Right ventricle myocardium inferior (tissue), 1 donor: ENCODE measurements at regions of chr13 and their contacts with region 1.

Region 1: GRCh38 chr13:47420568-47420967 is 523.7 kb upstream of the HTR2A start:
- DNase-seq: no peak
- ATAC-seq: peak; percentile 14

Region 2: DNA sequence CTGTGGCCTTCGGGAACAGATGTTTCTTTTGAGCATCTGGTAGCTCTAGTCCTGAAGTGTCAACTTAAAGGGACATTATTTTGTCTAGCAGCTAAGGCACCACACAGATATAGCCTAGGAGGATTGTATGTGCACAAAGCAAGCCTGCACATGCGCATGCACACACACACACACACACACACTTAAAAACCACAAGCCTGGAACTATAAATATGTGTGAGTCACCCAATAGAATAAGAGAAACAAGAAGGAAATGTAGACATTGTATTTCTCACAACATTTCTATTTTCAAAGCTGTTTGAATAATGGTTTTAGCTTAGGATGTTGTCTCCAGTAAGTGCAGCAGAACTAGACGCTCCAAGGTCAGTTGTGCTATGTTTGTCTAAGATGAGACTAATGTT is 64.0 kb after region 1 on chr13:
- intact Hi-C with region 1: no loop called
- DNase-seq: no peak
- ATAC-seq: no peak

Region 3: DNA sequence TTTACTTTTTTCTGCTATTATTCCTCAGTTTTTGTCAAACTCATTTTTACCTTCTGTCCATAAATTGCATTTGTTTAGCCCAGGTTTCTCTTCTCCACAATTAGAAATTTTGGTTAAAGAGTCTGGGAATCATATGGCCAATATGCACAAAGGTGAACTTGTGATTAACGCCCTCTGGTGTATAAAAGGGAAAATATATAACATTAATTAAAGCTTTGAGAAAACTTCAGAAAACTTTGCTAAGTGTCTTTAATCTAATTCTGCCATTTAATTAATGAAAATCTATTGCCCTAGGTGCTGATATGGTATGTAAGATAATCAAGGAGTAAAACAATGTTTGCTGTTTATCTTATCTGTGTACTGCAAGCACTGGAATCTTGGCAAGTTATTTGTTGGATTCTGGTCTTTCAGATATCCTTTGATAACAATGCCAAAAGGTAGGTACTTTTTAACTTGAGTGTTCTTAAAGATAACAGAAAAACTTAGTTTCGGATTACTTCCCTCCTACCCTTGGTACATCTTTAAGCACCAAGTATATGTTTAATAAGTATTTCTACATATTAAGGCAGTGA is 177.9 kb after region 1 on chr13:
- intact Hi-C with region 1: loop called (anchors 2 kb)
- DNase-seq: no peak
- ATAC-seq: no peak